Sciatic nerve (tissue), 2 donors: ENCODE measurements at regions of chr7 and their contacts with region 1.

Region 1: GRCh38 chr7:135083005-135083404 is 64.9 kb upstream of the TMEM140 start:
- DNase-seq: no peak
- ATAC-seq: no peak

Region 2: DNA sequence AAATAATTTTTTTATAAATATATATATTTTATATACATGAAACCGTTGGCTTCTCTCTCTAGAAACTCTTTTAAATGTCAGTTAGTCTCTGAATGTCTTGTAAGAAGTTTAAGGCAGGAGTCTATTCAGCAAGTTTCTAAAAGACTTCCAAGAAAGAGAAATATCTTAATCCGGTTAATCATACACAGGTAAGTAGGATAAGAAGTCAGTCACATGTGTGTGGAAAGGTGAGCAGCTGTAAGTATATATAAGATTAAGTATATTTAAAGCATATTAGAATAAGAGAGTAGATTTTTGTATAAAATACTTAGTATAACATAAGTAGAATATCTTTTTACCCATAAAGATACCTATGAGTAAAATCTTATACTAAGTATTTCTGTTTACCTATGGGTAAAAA is 47.8 kb before region 1 on chr7:
- intact Hi-C with region 1: loop called (anchors 10 kb)
- DNase-seq: no peak
- ATAC-seq: no peak

Region 3: GRCh38 chr7:136687693-136688322 is 1604.8 kb after region 1 on chr7:
- intact Hi-C with region 1: no loop called
- DNase-seq: no peak
- ATAC-seq: no peak